ENCODE measurements at regions of chr5 and their contacts with region 1.

Region 1: DNA sequence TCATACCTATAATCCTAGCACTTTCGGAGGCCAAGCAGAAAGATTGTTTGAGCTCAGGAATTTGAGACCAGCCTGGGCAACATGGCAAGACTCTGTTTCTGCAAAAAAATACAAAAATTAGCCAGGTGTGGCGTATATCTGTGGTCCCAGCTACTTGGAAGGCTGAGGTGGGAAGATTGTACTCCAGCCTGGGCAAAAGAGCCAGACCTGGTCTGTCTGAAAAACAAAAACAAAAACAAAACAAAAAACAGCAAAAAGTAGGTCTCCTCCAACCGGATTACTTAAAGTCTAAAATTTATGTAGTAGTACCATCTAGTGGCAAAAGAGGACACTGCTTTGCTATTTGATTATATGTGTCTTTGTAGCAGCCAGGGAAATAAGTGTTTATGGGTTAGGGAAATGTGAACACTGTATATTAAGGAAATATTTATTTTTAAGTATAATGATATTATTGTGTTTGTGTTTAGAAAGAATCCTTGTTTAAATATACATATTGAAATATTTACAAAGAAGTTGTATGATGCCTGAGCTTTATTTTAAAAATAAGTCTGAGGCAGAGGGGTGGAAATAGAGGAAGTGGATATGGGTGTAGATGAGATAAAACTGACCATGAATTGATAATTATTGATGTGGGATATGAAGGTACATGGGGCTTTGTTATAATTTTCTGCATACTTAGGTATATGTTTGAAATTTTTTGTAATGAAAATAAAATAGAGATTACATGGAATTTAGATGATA is 20.0 kb downstream of the APC start:
- DNase-seq: peak; percentile 67
- H3K27ac ChIP-seq: no peak overlapping the region
- CTCF ChIP-seq: peak; percentile 87

Region 2: DNA sequence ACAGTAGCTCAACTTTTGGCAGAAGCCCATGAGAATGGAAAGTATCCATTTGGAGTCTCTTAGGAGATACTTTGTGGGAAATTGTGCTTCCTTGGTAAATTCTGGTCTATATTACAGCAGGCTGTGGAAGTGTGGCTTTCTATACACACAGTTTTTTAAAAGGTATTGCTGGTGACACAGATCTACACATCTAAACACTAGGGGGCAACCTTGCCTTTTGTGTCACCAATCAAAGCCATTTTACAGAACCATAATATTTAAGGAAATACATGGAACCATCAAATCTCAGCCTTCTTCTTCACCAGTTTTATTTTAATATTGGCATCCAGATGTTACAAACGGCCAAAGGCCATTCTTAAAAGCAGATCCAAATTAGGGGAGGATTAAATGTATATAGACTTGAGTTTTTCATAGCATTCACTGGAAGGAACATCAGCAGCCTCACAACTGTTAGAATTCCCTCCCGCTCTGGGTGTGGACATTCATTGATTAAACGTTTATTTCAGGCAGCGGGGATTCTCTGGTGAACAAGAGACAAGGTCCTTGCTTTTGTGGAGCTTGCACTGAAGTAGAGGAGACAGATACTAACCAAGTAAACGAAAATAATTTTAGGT is 206.1 kb before region 1 on chr5:
- CTCF ChIA-PET with region 1: interaction called, 60 read pairs
- POLR2A ChIA-PET with region 1: no interaction called
- DNase-seq: peak; percentile 70
- H3K27ac ChIP-seq: no peak overlapping the region
- CTCF ChIP-seq: peak; percentile 89

Region 3: GRCh38 chr5:112737463-112738190 is 20.0 kb before region 1 on chr5 and contains the start of gene APC:
- CTCF ChIA-PET with region 1: interaction called, 10 read pairs
- POLR2A ChIA-PET with region 1: no interaction called
- DNase-seq: peak; percentile 96
- H3K27ac ChIP-seq: peak within 1 kb of the TSS; percentile 67
- CTCF ChIP-seq: no peak

Region 4: DNA sequence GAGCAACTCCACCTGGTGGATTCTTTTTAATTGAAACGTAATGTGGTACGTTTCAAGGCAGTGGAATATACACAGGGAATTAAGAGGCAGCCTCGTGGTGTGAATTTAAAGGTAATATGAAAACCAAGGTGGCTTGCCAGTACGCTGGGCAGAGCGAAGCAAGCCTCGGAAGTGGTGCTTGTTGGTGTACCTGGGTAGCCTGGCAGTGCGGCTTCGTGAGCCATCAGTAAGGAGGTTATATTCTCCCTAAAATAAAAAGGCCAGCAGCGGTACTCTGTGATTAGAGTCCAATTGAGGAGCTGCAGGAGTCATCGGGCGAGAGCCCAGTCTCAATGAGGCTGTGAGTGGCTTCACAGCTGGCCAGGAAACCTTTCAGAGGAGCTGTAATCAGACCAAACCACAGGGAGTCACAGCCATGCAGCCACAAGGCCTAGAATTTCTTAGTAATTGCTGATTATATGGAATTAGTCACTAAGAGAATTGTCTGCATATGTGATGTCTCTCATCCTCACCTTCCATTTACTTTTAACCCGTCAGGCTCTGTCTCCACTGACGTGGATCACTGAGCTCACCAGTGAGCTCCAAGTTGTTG is 276.6 kb after region 1 on chr5:
- CTCF ChIA-PET with region 1: no interaction called
- POLR2A ChIA-PET with region 1: no interaction called
- DNase-seq: no peak
- H3K27ac ChIP-seq: no peak overlapping the region
- CTCF ChIP-seq: no peak

Region 5: DNA sequence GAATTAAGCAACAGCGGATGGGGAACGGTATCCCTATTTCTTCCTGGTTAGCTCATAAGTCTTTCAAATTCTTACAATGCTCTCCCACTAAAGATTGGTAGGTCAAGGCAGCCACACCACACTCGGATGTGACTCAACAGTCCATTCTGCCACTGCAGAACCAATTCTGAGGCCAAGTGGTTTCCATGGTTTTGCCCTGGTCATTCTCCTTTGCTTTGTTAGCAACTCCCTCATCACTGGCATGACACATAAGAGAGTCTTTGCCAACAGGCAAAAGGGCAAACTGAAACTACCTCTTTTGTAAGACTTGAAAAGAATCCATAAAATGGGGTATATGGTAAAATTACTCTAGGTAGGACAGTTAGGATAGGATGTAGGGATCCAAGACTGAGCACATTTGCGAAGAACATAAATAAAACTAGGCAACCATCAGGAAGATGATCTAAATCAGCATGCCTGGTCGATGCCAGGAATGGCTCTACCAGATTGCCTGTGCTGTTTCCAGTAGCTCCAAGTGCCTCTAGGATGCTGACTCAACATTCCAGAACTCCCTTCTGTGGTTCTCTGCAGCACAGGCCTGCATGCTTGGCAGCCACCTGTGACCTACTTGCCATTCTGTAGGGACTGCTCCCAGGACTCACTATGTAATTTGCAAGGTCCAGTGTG is 324.4 kb after region 1 on chr5:
- CTCF ChIA-PET with region 1: no interaction called
- POLR2A ChIA-PET with region 1: no interaction called
- DNase-seq: peak; percentile 54
- H3K27ac ChIP-seq: peak overlapping the region; percentile 22
- CTCF ChIP-seq: no peak